Gastrocnemius medialis (tissue), 4 donors: ENCODE measurements at regions of chr18 and their contacts with region 1.

Region 1: GRCh38 chr18:7727361-7728076 is 160.4 kb downstream of the PTPRM start:
- DNase-seq: no peak
- ATAC-seq: no peak
- H3K4me3 ChIP-seq: no peak overlapping the region
- H3K27ac ChIP-seq: no peak overlapping the region
- H3K4me1 ChIP-seq: peaks cover 28 to 41% of the 10 kb centered on the region in 2 donors
- H3K27me3 ChIP-seq: no peaks in the 10 kb centered on the region
- CTCF ChIP-seq: no peak
- POLR2A ChIP-seq: no peak

Region 2: GRCh38 chr18:7793100-7793499 is 65.6 kb after region 1 on chr18:
- in situ Hi-C with region 1: no loop called
- intact Hi-C with region 1: no loop called
- DNase-seq: no peak
- ATAC-seq: no peak
- H3K4me3 ChIP-seq: no peak overlapping the region
- H3K27ac ChIP-seq: no peak overlapping the region
- H3K4me1 ChIP-seq: peaks cover 5 to 6% of the 10 kb centered on the region in 2 donors
- H3K27me3 ChIP-seq: no peaks in the 10 kb centered on the region
- CTCF ChIP-seq: no peak
- POLR2A ChIP-seq: no peak

Region 3: GRCh38 chr18:8107426-8107825 is 379.9 kb after region 1 on chr18:
- in situ Hi-C with region 1: no loop called
- intact Hi-C with region 1: no loop called
- DNase-seq: no peak
- ATAC-seq: no peak
- H3K4me3 ChIP-seq: no peak overlapping the region
- H3K27ac ChIP-seq: no peak overlapping the region
- H3K4me1 ChIP-seq: peaks cover 0 to 5% of the 10 kb centered on the region in 2 donors
- H3K27me3 ChIP-seq: no peaks in the 10 kb centered on the region
- CTCF ChIP-seq: no peak
- POLR2A ChIP-seq: no peak

Region 4: DNA sequence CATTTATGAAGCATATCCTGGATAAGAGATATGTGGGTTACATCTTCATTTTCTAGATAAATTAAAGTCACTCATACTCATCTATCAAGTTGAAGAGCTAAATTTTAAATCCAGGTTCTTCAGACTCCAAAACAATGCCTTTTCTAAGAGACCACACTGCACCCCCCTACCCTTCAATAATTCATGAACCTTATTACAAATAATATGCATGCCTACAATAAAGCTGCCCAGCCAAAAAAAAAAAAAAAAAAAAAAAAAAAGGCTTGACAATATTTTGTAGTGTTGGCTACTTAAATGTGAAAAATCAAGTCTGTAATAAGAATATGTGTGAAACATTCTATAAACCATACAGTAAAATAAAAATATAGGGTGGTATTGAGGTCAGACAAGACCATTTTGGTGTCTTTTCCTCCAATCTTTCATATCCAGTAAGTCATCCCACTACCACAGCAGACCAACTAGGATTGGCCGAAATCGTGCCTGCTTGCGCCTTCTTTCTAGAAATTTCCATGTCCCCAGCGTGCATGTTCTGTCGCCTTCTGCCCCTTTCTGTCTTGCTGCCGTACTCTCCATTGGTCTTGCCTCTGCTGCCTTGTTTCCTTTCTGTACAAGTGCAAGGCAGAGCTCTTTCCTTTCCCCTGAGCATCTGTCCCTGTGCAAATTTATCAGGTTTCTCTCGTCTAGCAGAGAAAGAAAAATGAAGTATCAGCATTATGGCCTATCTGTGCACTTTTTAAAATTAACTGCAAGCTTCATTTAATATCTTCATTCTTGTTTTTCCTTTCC is 1282.4 kb after region 1 on chr18:
- in situ Hi-C with region 1: no loop called
- intact Hi-C with region 1: loop called (anchors 5 kb)
- DNase-seq: no peak
- ATAC-seq: no peak
- H3K4me3 ChIP-seq: no peak overlapping the region
- H3K27ac ChIP-seq: no peak overlapping the region
- H3K4me1 ChIP-seq: no peaks in the 10 kb centered on the region
- H3K27me3 ChIP-seq: no peaks in the 10 kb centered on the region
- CTCF ChIP-seq: no peak
- POLR2A ChIP-seq: no peak